ENCODE measurements at regions of chr15 and their contacts with region 1.

Region 1: GRCh38 chr15:75639709-75640482 is at the start of gene IMP3:
- DNase-seq: peak; percentile 98
- H3K4me3 ChIP-seq: peak within 1 kb of the TSS; percentile 71 to 76
- H3K27ac ChIP-seq: peak within 1 kb of the TSS; percentile 87 to 92
- H3K4me1 ChIP-seq: peaks cover 11% of the 10 kb centered on the region in 2 experiments; a peak in 2 of 4 replicates
- H3K27me3 ChIP-seq: no peaks in the 10 kb centered on the region
- CTCF ChIP-seq: no peak
- EP300 ChIP-seq: no peak
- RAD21 ChIP-seq: no peak
- polyA plus RNA-seq, gene IMP3: 56.1 and 56.2 TPM in 2 replicates

Region 2: GRCh38 chr15:75453703-75454470 is 186.0 kb before region 1 on chr15:
- CTCF ChIA-PET with region 1: interaction called, 4 read pairs
- POLR2A ChIA-PET with region 1: interaction called, 12 read pairs
- DNase-seq: peak; percentile 91
- H3K4me3 ChIP-seq: peak overlapping the region; percentile 93 to 97
- H3K27ac ChIP-seq: peak overlapping the region; percentile 96 to 99
- H3K4me1 ChIP-seq: peaks cover 5 to 23% of the 10 kb centered on the region in 2 experiments; a peak in 3 of 4 replicates
- H3K27me3 ChIP-seq: no peaks in the 10 kb centered on the region
- CTCF ChIP-seq: no peak
- EP300 ChIP-seq: 0 out of 4 replicates have a peak, but pooled peaks of 1 of the 2 experiments have one; percentile 0
- RAD21 ChIP-seq: no peak

Region 3: DNA sequence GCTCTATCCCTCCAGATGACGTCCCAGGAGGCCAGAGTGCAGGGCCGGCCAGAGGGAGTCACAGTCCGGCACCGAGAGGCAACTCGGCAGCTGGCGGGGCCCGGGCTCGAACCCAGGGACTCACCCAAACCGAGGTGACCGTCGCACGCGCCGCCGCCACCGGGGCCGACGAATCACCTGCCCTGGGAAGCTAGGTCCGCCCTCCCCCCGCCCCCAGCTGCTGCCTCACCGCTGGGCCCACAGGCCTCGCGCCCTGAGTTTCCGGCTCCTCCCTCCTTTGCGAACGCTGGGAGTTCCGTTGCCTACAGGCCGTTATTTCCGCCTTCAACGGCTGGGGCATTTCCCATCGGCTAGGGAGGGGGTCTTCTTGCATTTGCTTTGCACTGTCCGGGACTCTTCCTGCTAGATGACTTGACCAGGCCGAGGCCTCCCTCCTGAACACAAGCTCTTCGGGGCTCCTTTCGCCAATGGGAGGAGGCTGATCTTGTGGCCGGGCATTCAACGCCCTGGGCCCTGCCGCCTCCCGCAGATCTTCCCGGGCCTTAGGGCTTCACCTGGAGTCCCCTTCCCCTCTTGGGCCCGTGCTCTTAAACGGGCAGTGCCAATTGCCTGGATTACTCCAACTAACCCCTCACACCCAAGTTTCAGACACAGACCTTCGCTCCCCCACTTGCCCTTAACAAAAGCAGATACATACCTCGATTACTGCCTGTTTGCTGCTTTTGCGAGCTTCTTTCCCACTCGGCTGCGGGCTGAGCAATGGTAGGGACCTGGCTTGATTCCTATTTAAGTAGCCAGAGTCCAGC is 14.2 kb before region 1 on chr15 and contains the start of gene SNUPN:
- CTCF ChIA-PET with region 1: interaction called, 9 read pairs
- POLR2A ChIA-PET with region 1: interaction called, 31 read pairs
- DNase-seq: peak; percentile 96
- H3K4me3 ChIP-seq: peak within 1 kb of the TSS; percentile 73 to 88
- H3K27ac ChIP-seq: peak within 1 kb of the TSS; percentile 92 to 95
- H3K4me1 ChIP-seq: peaks cover 5 to 10% of the 10 kb centered on the region in 2 experiments; a peak in 3 of 4 replicates
- H3K27me3 ChIP-seq: no peaks in the 10 kb centered on the region
- CTCF ChIP-seq: no peak
- EP300 ChIP-seq: peak; percentile 22 to 44; a peak in 3 of 4 replicates
- RAD21 ChIP-seq: no peak
- polyA plus RNA-seq, gene SNUPN: 31.7 and 36.4 TPM in 2 replicates

Region 4: DNA sequence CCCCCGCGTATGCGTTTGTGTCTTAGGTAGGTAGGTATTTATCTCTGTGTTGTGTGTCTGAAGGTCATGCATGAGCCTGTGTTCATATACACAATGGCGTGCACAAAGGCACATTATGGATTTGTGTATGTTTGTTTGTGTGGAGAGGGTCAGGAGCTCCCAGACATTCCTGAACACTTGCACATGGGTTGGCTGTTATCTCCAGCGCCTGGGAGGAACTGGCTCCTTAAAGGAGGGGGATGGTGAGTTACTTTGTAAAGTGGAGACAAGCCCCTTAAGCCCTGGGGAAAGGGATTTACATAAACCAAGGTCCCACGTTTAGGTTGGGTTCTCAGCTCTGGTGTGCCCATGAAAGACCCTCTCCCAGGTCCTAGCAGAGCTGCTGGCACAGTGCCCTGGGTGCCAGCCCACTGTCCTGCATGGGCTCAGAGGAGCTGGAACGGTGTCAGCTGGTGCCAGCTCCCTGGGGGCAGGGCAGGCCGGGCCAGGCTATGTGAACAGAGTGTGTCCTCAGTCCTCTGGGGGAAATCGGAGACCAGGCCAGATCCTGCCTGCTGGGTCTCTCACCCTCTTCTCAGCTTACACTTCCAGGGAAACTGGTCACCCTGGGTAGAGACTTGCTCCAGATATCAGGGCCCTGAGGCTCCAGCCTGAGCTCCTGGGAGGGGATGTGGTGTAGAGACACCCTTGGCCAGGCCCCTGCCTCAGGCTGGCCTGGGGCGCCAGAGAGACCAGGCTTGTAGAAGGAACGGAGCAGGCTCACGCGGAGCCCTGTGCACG is 32.9 kb after region 1 on chr15:
- CTCF ChIA-PET with region 1: interaction called, 5 read pairs
- POLR2A ChIA-PET with region 1: interaction called, 10 read pairs
- DNase-seq: peak; percentile 64
- H3K4me3 ChIP-seq: no peak overlapping the region
- H3K27ac ChIP-seq: peak overlapping the region; percentile 60
- H3K4me1 ChIP-seq: peaks cover 28 to 30% of the 10 kb centered on the region in 2 experiments; a peak in 3 of 4 replicates
- H3K27me3 ChIP-seq: no peaks in the 10 kb centered on the region
- CTCF ChIP-seq: no peak
- EP300 ChIP-seq: no peak
- RAD21 ChIP-seq: no peak